Activated naive CD4-positive, alpha-beta T cell treated with anti-CD3 and anti-CD28 coated beads, Interleukin-2, amount 10 ng/mL, durations not matched to agents 7 days and 5 days (primary cell): ENCODE measurements at regions of chr22 and their contacts with region 1.

Region 1: GRCh38 chr22:20606041-20606783 is 98.8 kb downstream of the MED15 start:
- DNase-seq: peak; percentile 81
- H3K4me3 Mint-ChIP-seq: no peak overlapping the region
- H3K27ac Mint-ChIP-seq: peak overlapping the region; percentile 69
- H3K4me1 Mint-ChIP-seq: peaks cover 8% of the 10 kb centered on the region
- H3K27me3 Mint-ChIP-seq: peaks cover 42% of the 10 kb centered on the region

Region 2: DNA sequence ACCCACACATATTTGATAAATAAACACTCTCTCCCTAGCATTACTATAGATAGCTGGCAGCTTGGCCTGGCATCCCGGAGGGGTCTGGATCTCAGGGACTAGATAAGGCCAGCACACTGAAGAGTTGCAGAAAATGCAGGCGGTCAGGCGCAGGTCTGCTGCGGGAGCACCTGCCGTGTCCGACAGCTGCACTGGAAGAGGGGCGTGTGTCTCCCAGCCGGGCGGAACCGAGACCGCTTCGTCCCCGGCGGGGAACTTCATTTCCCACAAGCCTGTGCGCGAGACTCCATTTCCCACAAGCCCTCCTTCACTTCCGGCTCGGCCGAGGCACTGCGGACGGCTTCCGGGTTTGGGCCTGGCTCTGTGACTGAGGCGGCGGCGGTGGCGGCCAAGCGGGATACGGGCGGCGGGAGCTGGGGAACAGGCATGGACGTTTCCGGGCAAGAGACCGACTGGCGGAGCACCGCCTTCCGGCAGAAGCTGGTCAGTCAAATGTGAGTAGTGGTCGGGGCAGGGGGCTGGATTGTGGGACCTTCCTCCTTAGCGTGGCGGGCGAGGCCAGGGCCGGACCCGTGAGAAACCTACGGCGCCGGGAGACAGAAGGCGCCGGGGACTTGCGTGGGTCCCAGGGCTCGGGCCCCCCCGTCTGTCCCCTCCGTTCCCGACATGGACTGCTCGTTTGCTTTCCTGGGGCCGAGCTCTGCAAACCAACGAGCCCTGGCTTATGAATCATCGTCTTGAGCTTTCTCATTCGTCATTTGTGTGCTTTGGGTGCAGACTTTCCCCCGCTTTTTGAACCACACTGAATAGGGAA is 98.8 kb before region 1 on chr22 and contains the start of gene MED15:
- CTCF ChIA-PET with region 1: no interaction called
- DNase-seq: peak; percentile 95
- H3K4me3 Mint-ChIP-seq: peak within 1 kb of the TSS; percentile 92
- H3K27ac Mint-ChIP-seq: peak within 1 kb of the TSS; percentile 97
- H3K4me1 Mint-ChIP-seq: peaks cover 47% of the 10 kb centered on the region
- H3K27me3 Mint-ChIP-seq: no peaks in the 10 kb centered on the region

Region 3: DNA sequence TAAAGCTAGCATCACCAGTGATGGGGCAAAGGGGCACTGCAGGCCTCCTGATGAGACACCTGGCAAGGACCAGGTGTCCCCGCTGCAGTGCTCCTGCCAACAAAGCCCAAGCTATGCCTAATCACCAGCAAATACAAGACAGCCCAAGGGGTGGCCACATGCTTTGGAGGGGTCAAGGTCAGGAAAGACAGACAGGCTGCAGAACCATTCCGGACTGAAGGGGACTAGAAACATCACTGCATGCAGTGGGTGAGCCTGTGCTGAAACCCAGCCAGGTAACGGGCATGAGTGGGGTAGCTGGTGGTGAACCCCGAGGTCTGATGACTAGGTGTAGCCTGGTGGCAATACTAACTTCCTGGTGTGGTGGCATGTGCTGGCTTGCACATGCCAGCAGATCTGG is 12.3 kb after region 1 on chr22:
- CTCF ChIA-PET with region 1: interaction called, 10 read pairs
- DNase-seq: no peak
- H3K4me3 Mint-ChIP-seq: no peak overlapping the region
- H3K27ac Mint-ChIP-seq: no peak overlapping the region
- H3K4me1 Mint-ChIP-seq: no peaks in the 10 kb centered on the region
- H3K27me3 Mint-ChIP-seq: peaks cover 12% of the 10 kb centered on the region